ENCODE measurements at regions of chr3 and their contacts with region 1.

Region 1: DNA sequence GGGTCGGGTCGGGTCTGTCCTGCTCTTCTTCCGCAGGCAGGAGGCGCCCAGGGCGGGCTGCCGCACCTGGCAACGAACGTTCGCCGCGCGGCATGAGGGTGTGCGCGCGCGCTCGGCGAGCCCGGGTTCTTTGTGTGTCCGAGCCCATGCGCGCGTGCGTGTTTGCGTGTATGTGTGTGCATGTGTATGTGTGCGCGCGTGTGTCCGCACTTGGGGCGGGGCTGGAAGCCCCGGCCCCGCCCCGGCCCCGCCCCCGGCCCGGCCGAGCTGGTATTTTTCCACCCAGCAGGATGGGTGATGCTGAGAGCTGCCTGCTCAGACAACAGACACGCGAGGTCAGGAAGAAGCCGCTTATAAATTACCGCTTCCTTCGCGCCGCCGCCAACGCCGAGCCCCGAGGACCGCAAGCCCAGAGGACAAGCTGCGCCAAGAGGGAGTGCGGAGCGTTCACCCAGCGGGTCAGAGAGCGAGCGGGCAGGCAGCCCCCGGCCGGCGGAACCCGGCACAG is at the start of gene SLC6A6:
- DNase-seq: peak; percentile 89 to 97 (median 94)
- ATAC-seq: peak; percentile 70 to 84 (median 79)
- H3K4me3 ChIP-seq: peak within 1 kb of the TSS; percentile 62 to 92 (median 81)
- H3K27ac ChIP-seq: peak within 1 kb of the TSS; percentile 43 to 96 (median 86)
- H3K4me1 ChIP-seq: peaks cover 0 to 51% (median 29%) of the 10 kb centered on the region in 12 donors
- H3K27me3 ChIP-seq: peaks cover 0 to 5% (median 0%) of the 10 kb centered on the region in 9 donors
- CTCF ChIP-seq: peak in 8 of 12 donors; percentile 4 to 58 (median 43)
- POLR2A ChIP-seq: peak in 1 of 2 donors; percentile 83
- total RNA-seq, gene SLC6A6: 17.5 to 101 (median 34.9) TPM

Region 2: DNA sequence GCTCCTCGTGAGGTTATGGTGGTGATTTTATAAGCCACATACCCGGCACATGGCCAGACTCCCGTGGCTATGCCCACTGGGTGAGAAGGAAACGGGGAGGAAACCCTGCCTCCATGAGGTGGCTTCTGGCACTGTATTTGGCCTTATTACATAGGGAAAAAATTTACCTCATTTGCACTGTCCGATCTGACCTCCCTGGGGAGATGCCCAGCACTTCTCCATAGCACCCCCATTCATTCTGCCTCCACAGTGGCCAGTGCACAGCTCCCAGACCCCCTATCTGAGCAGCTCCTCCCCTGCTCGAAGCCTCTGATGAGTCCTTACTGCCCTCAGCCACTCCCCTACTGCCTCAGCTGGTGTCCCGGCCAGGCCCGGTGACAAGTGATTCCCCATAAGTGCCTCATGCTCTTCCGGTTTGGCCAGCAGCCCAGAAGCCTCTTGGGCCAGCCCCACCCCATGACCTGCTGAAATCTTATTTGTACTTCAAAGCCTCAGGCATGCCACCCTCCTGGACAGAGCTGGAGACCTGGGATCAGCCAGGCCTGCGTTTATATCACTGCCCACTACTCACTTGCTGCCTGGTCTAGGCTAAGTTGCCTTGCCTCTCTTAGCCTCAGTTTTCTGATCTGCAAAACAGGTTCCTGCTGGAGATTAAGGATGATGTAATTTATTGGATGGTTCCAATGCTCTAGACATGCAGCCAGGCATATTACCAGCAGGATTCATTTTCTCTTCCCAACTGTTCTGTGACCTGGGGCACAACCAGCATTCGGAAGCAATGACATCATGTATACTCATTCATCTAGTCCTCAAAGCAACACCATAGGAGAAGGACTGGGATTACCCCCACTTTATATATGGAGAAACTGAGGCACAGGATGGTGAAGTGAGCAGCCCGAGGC is 30.5 kb before region 1 on chr3:
- intact Hi-C with region 1: loop called in 1 of 10 experiments (anchors 2 kb)
- DNase-seq: peak; percentile 86 to 94 (median 89)
- ATAC-seq: peak; percentile 73 to 87 (median 82)
- H3K4me3 ChIP-seq: no peak overlapping the region
- H3K27ac ChIP-seq: peak overlapping the region in 11 of 12 donors; percentile 11 to 87 (median 64)
- H3K4me1 ChIP-seq: peaks cover 6 to 69% (median 43%) of the 10 kb centered on the region in 12 donors
- H3K27me3 ChIP-seq: peaks cover 0 to 13% (median 0%) of the 10 kb centered on the region in 9 donors
- CTCF ChIP-seq: peak in 3 of 12 donors; percentile 7 to 19 (median 17)
- POLR2A ChIP-seq: peak in 1 of 2 donors; percentile 14

Region 3: DNA sequence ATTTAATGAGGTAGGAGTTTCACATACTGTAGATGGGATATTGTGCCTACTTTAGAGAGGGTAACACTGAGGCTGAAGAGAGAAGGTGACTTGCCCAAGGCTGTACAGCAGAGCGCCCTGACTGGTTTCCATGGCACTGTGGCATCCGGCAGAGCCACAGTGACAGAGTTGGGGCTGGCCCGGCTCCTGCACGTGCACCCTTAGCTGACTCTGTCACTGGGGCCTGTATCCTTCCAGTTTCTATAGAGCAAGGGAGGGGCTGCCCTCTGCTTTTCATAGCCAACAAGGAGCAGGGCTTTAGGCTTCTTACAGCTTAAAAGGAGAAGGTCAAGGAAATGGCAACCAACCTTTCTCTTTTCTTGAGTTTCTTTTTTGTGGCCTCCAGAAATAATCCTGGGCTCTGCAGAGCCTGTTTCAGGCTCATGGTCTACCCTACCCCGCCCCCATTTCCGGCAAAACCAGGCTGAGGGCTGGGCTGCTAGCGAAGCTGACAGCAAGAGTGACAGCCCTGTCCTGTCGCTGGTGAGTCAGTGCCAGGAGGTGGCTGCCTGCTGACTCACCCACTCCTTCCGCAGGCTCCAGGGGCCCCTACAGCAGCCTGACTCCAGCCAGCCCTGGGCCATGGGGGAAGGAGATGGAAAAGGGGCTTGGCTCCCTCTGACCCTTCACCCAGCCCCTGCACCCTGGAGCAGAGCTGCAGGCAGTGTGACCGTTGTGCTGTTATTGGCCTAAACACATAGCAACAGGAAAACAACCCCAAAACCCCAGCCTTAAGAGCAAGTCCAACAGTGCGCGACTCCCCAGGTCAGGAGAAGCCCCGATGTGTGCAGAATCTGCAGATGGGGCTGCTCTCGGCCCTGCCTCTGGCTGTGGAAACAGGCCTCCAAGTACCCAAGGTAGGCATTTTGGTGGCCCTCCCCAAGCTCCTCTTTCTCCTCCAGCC is 29.8 kb after region 1 on chr3:
- intact Hi-C with region 1: loop called in 3 of 10 experiments (anchors 2 kb)
- DNase-seq: peak; percentile 85 to 95 (median 89)
- ATAC-seq: peak; percentile 80 to 88 (median 85)
- H3K4me3 ChIP-seq: peak overlapping the region in 2 of 12 donors; percentile 2 to 36
- H3K27ac ChIP-seq: peak overlapping the region; percentile 1 to 97 (median 65)
- H3K4me1 ChIP-seq: peaks cover 14 to 100% (median 67%) of the 10 kb centered on the region in 12 donors
- H3K27me3 ChIP-seq: no peaks in the 10 kb centered on the region
- CTCF ChIP-seq: no peak
- POLR2A ChIP-seq: no peak

Region 4: DNA sequence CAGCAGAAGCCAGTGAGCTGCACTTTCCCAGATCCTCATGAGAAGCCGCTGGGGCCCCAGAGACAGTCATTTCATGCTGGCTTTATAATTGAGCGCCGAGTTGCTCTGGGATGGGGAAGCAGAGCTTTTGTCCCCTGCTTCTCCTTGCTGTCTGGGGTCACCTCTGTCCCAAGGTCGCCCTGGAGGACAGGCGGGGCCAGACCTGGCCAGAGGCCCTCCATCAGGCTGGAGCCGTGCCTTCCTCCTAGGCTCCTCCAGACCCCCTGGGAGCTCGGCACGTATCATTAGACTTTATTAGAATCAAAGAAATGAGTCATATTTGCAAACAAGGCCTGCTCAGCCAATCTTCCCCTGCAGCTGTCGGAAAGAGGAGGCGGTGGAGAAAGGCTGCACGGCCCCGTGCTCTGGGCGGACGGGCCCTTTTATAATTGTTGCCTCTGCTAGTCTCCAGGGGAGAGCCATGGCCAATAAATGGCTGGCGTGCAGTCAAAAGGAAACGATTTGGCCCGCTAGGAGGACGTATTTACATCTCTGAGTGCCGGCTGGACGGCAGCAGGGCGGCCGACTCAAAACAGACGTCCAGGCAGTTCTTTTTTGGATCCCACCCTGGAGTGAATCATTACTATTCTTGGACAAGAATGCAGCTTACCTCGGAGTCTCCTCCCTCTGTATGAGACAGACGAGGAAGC is 50.5 kb after region 1 on chr3:
- intact Hi-C with region 1: loop called in 5 of 10 experiments (anchors 5 to 10 kb)
- DNase-seq: peak; percentile 91 to 95 (median 93)
- ATAC-seq: peak; percentile 86 to 93 (median 88)
- H3K4me3 ChIP-seq: no peak overlapping the region
- H3K27ac ChIP-seq: peak overlapping the region; percentile 5 to 94 (median 80)
- H3K4me1 ChIP-seq: peaks cover 19 to 72% (median 39%) of the 10 kb centered on the region in 12 donors
- H3K27me3 ChIP-seq: peaks cover 0 to 12% (median 0%) of the 10 kb centered on the region in 9 donors
- CTCF ChIP-seq: peak in 5 of 12 donors; percentile 6 to 40 (median 25)
- POLR2A ChIP-seq: no peak

Region 5: GRCh38 chr3:14508961-14509795 is 106.8 kb after region 1 on chr3:
- intact Hi-C with region 1: no loop called
- DNase-seq: peak; percentile 71 to 88 (median 73)
- ATAC-seq: peak; percentile 54 to 78 (median 71)
- H3K4me3 ChIP-seq: peak overlapping the region in 1 of 12 donors; percentile 11
- H3K27ac ChIP-seq: peak overlapping the region in 2 of 12 donors; percentile 23 to 38
- H3K4me1 ChIP-seq: peaks cover 0 to 27% (median 4%) of the 10 kb centered on the region in 12 donors
- H3K27me3 ChIP-seq: no peaks in the 10 kb centered on the region
- CTCF ChIP-seq: peak; percentile 88 to 99 (median 96)
- POLR2A ChIP-seq: no peak